PC-3 (cell line): ENCODE measurements at regions of chr11 and their contacts with region 1.

Region 1: DNA sequence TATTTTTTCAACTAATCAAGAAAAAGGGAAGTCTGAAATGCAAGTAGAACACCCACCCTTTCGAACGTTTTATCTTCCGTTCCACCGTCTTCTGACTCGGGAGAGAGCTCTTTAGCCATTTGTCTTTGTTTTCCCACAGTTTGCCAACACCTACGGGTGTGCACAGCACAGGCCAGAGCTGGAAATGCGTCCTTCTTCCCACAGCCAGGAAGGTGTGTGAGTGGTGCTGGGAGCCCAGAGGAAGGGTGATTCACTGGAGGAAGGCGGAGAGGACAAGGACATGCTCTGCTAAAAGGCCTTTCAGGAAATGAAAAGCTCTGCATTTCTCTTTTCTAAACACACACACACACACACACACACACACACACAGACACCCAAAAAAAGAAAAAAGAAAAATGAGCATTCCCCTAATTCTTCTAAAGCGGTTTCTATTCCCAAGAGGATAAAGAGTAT is 18.5 kb downstream of the ENDOD1 start:
- DNase-seq: peak; percentile 90
- ATAC-seq: peak; percentile 93
- H3K4me3 ChIP-seq: peak overlapping the region; percentile 58
- H3K27ac ChIP-seq: peak overlapping the region; percentile 84
- H3K4me1 ChIP-seq: peaks cover 30% of the 10 kb centered on the region
- H3K27me3 ChIP-seq: no peaks in the 10 kb centered on the region
- CTCF ChIP-seq: no peak

Region 2: DNA sequence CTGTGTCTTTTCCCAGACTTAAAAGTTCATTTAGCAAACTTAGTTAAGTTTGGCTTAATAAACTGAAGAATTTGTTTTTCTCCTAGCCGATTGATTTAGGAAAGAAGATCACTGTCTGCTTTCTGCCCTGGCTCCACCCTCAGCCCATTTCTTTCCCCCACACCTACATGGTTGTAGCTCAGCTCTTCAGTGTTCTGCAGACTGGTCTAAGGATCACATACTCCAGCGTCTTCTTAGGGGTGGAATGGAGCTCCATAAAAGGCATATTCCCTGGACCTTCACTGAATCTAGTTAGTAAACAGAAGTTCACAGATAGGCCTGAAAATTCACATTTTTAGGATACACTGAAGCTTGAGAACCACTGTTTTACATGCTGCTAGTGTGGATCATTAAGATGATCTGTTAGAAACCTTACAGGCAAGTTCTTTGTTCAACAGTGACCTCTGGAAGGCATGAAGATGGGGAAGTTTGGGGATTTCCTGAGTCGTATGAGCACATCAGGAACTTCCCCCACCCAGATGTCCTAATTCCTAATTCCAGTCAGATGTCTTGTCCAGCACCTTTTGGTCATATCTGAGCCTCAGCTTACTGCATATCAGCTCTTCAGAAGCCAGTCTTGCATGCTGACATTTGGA is 524.2 kb before region 1 on chr11:
- CTCF ChIA-PET with region 1: no interaction called
- POLR2A ChIA-PET with region 1: no interaction called
- intact Hi-C with region 1: no loop called
- DNase-seq: no peak
- ATAC-seq: no peak
- H3K4me3 ChIP-seq: no peak overlapping the region
- H3K27ac ChIP-seq: no peak overlapping the region
- H3K4me1 ChIP-seq: no peaks in the 10 kb centered on the region
- H3K27me3 ChIP-seq: no peaks in the 10 kb centered on the region
- CTCF ChIP-seq: no peak

Region 3: DNA sequence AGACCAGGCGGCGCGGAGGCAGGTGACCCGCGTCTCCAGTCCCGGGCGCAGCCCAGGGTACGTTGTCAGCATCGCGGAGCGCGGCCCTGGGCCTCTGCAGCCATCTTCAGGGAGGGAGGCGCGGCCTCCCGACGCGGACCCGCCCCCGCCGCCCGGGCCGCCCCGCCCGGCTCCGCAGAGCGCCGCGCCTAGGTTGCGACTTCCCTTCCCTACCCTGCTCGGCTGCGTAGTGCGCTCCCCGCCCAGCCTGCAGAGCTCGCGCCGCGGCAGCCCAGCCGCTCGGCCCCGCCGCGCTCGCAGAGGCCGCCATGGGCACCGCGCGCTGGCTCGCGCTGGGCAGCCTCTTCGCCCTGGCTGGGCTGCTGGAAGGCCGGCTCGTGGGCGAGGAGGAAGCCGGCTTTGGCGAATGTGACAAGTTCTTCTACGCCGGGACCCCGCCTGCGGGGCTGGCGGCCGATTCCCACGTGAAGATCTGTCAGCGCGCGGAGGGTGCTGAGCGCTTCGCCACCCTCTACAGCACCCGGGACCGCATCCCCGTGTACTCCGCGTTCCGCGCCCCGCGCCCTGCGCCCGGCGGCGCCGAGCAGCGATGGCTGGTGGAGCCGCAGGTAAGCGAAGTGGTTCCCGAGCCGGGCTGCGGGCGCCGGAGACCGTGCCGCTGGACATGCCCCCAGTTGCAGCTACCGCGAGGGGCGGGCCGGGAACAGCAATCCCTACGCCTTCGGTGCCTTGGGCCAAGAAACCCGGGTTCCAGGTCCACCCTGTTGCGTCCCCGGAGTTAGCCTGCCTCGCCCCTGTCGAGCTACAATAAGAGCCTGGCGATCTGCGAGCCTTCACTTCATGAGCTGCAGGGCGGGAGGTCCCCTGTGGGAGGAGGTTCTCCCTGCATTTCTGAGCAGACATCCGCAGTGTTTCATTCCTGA is 18.3 kb before region 1 on chr11 and contains the start of gene ENDOD1:
- CTCF ChIA-PET with region 1: interaction called, 3 read pairs
- POLR2A ChIA-PET with region 1: interaction called, 12 read pairs
- intact Hi-C with region 1: loop called (anchors 1 kb)
- DNase-seq: peak; percentile 90
- ATAC-seq: peak; percentile 93
- H3K4me3 ChIP-seq: peak within 1 kb of the TSS; percentile 89
- H3K27ac ChIP-seq: no peak within 1 kb of the TSS
- H3K4me1 ChIP-seq: peaks cover 36% of the 10 kb centered on the region
- H3K27me3 ChIP-seq: no peaks in the 10 kb centered on the region
- CTCF ChIP-seq: peak; percentile 32; the same call in 1 of the 2 replicates
- total RNA-seq, gene ENDOD1: 28.5 and 32.1 TPM in 2 replicates

Region 4: GRCh38 chr11:95134491-95134890 is 26.3 kb after region 1 on chr11:
- CTCF ChIA-PET with region 1: no interaction called
- POLR2A ChIA-PET with region 1: interaction called, 3 read pairs
- intact Hi-C with region 1: loop called (anchors 1 kb)
- DNase-seq: peak; percentile 95
- ATAC-seq: peak; percentile 100
- H3K4me3 ChIP-seq: no peak overlapping the region; the same call in 1 of the 2 replicates
- H3K27ac ChIP-seq: peak overlapping the region; percentile 61
- H3K4me1 ChIP-seq: peaks cover 32% of the 10 kb centered on the region
- H3K27me3 ChIP-seq: no peaks in the 10 kb centered on the region
- CTCF ChIP-seq: no peak

Region 5: DNA sequence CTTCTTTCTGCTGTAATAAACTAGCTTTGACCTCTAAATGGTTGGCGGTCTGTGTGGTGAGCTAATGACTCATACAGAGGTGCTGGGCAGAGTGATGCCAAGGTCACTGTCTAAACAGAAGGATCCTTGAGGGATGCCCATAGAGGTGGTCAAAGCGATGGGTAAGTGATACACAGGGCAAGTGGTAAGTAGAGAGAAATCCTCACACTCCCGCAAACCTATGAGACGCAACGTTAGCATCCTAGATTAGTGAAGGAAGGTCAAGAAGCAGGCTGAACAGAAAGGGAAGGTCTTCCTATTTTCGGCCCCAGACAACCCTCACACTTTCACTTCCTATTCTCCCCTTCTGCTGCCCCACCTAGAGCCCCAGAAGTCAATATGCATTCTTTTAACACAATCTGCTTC is 188.4 kb after region 1 on chr11:
- CTCF ChIA-PET with region 1: no interaction called
- POLR2A ChIA-PET with region 1: no interaction called
- intact Hi-C with region 1: no loop called
- DNase-seq: no peak
- ATAC-seq: no peak
- H3K4me3 ChIP-seq: no peak overlapping the region
- H3K27ac ChIP-seq: no peak overlapping the region
- H3K4me1 ChIP-seq: no peaks in the 10 kb centered on the region
- H3K27me3 ChIP-seq: peaks cover 67% of the 10 kb centered on the region
- CTCF ChIP-seq: no peak